ENCODE measurements at regions of chr9 and their contacts with region 1.

Region 1: DNA sequence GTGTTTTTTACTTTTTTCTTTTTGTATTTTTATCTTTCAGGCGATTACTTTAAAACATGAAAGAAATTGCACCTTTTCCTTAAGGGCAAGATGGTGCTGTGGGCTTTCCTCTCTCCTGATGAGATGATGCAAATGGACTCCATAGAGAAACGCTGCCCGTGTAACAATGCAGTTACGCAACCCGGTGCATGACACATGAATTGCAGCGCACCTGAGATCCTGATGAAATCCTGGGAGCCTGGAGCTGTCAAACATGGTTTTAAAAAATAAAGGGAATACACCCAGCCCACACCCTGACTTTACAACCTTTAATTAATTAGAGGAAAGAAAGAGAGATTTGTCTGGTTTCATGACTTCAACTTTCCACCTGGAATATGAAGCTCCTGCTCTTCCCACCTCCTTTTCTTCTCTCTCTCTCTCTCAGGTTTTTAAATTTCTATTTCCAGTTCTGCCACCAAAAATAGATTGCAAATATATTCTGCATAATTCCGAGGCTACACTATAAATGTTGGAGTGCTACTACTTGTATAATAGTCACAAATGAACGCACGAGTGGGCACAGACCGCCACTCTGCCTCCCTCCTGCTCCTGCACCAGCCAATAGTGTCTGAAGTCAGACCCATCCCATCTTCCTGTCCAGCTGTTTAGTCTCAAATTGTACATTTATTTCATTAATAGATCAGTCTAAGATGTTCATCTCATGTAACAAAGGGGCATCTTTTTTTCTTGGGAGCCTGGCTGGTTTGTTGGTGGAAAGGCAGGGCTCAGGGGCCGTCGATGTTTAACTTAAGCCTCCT is 179.1 kb downstream of the AUH start:
- DNase-seq: no peak
- CTCF ChIP-seq: no peak

Region 2: DNA sequence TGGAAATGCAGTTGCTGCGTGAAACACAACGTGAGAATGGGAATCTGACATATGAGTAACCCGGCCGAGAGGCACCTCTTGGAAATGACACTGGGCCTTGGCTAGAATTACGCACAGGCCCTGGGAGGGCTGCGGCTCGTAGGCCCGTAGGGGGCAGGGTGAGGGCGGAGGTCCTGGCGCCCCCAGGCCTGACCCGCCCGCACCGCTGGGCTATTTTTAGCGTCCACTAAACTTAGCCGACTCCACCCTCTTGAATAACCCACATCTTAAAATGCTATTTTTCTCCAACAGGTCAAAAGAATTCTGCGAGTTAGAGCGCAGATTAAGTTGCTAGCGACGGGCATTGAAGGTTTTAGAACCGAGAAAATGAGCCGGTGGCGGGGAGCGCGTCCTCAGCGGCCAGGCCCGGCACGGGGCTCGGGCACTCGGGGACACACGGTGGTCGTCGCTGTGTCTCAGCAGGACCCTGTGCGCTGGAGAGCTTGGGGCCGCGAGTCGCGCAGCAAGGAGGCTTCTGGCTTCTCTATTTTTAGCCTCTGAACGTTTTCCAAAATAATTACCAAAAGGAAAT is 10.5 kb after region 1 on chr9:
- CTCF ChIA-PET with region 1: interaction called, 12 read pairs
- POLR2A ChIA-PET with region 1: no interaction called
- DNase-seq: no peak
- CTCF ChIP-seq: no peak

Measured in GM10248 (cell line).